Natural killer cell (primary cell): ENCODE measurements at regions of chr18 and their contacts with region 1.

Region 1: GRCh38 chr18:74495581-74496507 is at the start of gene CNDP2:
- DNase-seq: peak; percentile 95 to 99
- ATAC-seq: peak; percentile 73 to 91 (median 82)
- H3K4me3 ChIP-seq: peak within 1 kb of the TSS; percentile 56
- H3K4me3 Mint-ChIP-seq: peak within 1 kb of the TSS; percentile 95
- H3K27ac ChIP-seq: peak within 1 kb of the TSS; percentile 81
- H3K27ac Mint-ChIP-seq: peak within 1 kb of the TSS; percentile 96 to 98
- H3K4me1 ChIP-seq: peaks cover 40% of the 10 kb centered on the region
- H3K4me1 Mint-ChIP-seq: peaks cover 42 to 44% of the 10 kb centered on the region in 2 donors
- H3K27me3 ChIP-seq: no peaks in the 10 kb centered on the region
- H3K27me3 Mint-ChIP-seq: no peaks in the 10 kb centered on the region
- CTCF ChIP-seq: no peak
- total RNA-seq, gene CNDP2: 147 to 167 (median 153) TPM

Region 2: DNA sequence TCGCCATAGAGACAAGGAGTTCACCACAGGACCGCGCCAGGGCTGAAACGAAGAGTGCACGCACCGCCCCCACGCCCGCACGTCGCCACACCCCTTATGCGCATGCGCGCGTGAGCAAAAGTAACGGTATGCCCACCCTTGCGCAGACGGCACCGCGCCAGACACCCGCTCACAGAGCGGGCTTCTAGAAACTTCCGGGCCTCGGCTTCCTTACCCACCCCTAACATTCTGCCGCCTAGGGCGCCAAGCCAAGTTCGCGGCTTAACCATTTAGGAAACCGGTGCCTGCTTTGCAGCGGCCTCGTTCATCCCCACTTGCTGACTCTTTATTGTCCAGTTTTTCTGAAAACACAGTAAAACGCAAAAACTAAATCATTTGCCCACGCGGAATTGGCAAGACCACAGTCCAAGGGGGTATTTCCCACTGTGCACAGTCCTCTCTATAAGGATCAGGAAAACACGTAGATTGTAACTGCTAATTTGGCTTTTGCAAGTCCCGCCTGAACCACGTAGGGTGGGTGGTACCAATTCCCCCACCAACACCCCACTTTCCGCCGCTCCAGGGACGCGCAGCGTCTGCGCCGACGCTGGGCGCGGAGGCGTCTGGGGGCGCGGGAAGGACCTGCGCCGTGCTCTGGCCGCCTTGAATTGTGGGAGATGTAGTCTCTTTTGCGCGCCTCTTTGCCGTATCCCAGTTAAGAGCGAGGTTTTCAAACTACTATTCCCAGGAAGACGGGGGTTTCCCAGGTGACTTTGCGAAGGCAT is 347.9 kb before region 1 on chr18 and contains the starts of genes FBXO15 and TIMM21:
- intact Hi-C with region 1: loop called (anchors 1 kb)
- DNase-seq: peak; percentile 93 to 99
- ATAC-seq: peak; percentile 84 to 93 (median 85)
- H3K4me3 ChIP-seq: peak within 1 kb of the TSS; percentile 84
- H3K4me3 Mint-ChIP-seq: peak within 1 kb of the TSS; percentile 97
- H3K27ac ChIP-seq: peak within 1 kb of the TSS; percentile 96
- H3K27ac Mint-ChIP-seq: peak within 1 kb of the TSS; percentile 98 to 100
- H3K4me1 ChIP-seq: peaks cover 15% of the 10 kb centered on the region
- H3K4me1 Mint-ChIP-seq: peaks cover 36% of the 10 kb centered on the region in 2 donors
- H3K27me3 ChIP-seq: no peaks in the 10 kb centered on the region
- H3K27me3 Mint-ChIP-seq: peaks cover 6 to 7% of the 10 kb centered on the region in 2 donors
- CTCF ChIP-seq: no peak
- total RNA-seq, gene FBXO15: 0.50 to 2.6 (median 0.87) TPM
- total RNA-seq, gene TIMM21: 13.1 to 17.3 (median 16.1) TPM

Region 3: DNA sequence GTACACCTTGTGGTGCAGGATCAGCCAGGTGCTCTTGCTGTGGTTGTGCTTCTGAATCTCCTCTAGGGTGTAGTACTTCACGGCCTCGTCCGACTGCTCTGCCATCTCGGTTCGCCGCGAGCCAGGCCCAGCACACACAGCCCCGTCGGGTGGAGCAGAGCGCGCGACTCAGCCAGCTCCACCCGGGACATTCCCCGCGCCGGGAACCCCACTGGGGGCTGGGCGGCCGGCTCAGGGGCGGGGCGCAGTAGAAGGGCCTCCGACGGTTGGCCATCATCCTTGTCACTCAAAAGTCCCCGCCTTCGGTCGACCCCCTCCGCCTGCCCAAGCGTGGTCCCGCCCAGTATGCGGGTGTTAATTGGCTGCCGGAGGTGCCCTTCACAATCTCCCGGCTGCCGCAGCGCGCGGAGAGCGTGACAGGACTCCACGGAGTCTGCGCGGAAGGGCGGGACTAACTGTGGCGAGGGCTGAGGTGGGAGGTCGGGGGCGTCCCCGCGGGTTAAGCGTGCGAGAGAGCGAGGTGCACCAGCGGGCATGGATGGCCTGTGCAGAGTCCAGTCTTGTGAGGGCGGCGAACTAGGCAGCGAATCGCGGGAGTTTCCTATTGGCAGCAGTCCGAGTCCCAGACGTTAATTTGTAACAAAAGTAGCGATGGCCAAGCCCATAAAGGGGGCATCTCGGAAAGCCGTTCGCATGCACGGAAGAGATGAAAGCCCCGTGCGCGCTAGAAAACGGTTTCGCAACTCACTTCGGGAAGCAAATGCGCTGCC is 203.9 kb before region 1 on chr18 and contains the start of gene CYB5A:
- intact Hi-C with region 1: loop called (anchors 2 kb)
- DNase-seq: peak; percentile 99 to 100
- ATAC-seq: peak; percentile 95 to 100 (median 96)
- H3K4me3 ChIP-seq: peak within 1 kb of the TSS; percentile 95
- H3K4me3 Mint-ChIP-seq: no peak within 1 kb of the TSS
- H3K27ac ChIP-seq: peak within 1 kb of the TSS; percentile 43
- H3K27ac Mint-ChIP-seq: peak within 1 kb of the TSS; percentile 85 to 95
- H3K4me1 ChIP-seq: peaks cover 13% of the 10 kb centered on the region
- H3K4me1 Mint-ChIP-seq: peaks cover 5 to 8% of the 10 kb centered on the region in 2 donors
- H3K27me3 ChIP-seq: no peaks in the 10 kb centered on the region
- H3K27me3 Mint-ChIP-seq: no peaks in the 10 kb centered on the region
- CTCF ChIP-seq: no peak
- total RNA-seq, gene CYB5A: 10.4 to 14.6 (median 13.0) TPM

Region 4: GRCh38 chr18:74353169-74353775 is 142.6 kb before region 1 on chr18:
- intact Hi-C with region 1: loop called (anchors 1 kb)
- DNase-seq: peak in 1 of 2 donors; percentile 86
- ATAC-seq: peak in 2 of 3 donors; percentile 44 to 47
- H3K4me3 ChIP-seq: no peak overlapping the region
- H3K4me3 Mint-ChIP-seq: no peak overlapping the region
- H3K27ac ChIP-seq: no peak overlapping the region
- H3K27ac Mint-ChIP-seq: no peak overlapping the region
- H3K4me1 ChIP-seq: no peaks in the 10 kb centered on the region
- H3K4me1 Mint-ChIP-seq: peaks cover 0 to 5% of the 10 kb centered on the region in 2 donors
- H3K27me3 ChIP-seq: peaks cover 2% of the 10 kb centered on the region
- H3K27me3 Mint-ChIP-seq: no peaks in the 10 kb centered on the region
- CTCF ChIP-seq: peak; percentile 36

Region 5: GRCh38 chr18:74370115-74370514 is 125.7 kb before region 1 on chr18:
- intact Hi-C with region 1: no loop called
- DNase-seq: no peak
- ATAC-seq: no peak
- H3K4me3 ChIP-seq: no peak overlapping the region
- H3K4me3 Mint-ChIP-seq: no peak overlapping the region
- H3K27ac ChIP-seq: no peak overlapping the region
- H3K27ac Mint-ChIP-seq: no peak overlapping the region
- H3K4me1 ChIP-seq: peaks cover 14% of the 10 kb centered on the region
- H3K4me1 Mint-ChIP-seq: peaks cover 0 to 9% of the 10 kb centered on the region in 2 donors
- H3K27me3 ChIP-seq: no peaks in the 10 kb centered on the region
- H3K27me3 Mint-ChIP-seq: peaks cover 15 to 19% of the 10 kb centered on the region in 2 donors
- CTCF ChIP-seq: no peak

Region 6: DNA sequence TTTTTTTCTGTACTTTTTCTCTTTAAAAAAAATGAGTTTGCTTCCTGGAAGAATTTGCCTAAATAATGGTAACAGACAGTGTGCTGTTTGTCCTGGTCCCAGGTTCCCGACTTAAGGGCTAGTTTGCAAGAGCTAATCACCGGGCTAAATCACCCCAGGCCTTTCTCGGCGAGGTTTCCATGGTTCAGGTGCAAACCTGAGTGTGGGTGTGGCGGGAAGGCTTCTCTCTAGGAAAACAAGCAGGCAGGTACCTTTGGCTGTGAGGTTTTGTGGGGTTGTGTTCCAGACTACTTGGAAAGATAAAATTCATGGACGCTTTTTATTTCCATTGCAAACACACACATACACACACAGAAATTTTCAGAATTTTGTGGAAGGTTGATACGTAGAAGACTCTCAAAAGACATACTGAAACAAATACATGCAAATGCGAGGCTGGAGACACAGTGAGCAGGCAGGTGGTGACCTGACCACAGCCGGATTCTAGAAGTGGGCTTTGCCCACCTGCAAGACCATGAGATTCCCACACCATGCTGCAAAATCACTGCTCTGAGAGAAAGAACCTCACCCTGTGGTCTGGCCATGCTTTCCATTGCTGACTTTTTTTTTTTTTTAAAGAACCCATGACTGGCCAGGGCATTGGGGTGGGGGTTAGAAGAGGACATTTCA is 39.3 kb after region 1 on chr18:
- intact Hi-C with region 1: no loop called
- DNase-seq: no peak
- ATAC-seq: no peak
- H3K4me3 ChIP-seq: no peak overlapping the region
- H3K4me3 Mint-ChIP-seq: no peak overlapping the region
- H3K27ac ChIP-seq: no peak overlapping the region
- H3K27ac Mint-ChIP-seq: no peak overlapping the region
- H3K4me1 ChIP-seq: no peaks in the 10 kb centered on the region
- H3K4me1 Mint-ChIP-seq: no peaks in the 10 kb centered on the region
- H3K27me3 ChIP-seq: no peaks in the 10 kb centered on the region
- H3K27me3 Mint-ChIP-seq: peaks cover 3 to 6% of the 10 kb centered on the region in 2 donors
- CTCF ChIP-seq: no peak

Region 7: GRCh38 chr18:76492669-76493212 is 1996.9 kb after region 1 on chr18:
- intact Hi-C with region 1: loop called (anchors 5 kb)
- DNase-seq: peak; percentile 97 to 100
- ATAC-seq: peak; percentile 61 to 89 (median 80)
- H3K4me3 ChIP-seq: peak overlapping the region; percentile 82
- H3K4me3 Mint-ChIP-seq: peak overlapping the region; percentile 98
- H3K27ac ChIP-seq: peak overlapping the region; percentile 57
- H3K27ac Mint-ChIP-seq: peak overlapping the region; percentile 88 to 98
- H3K4me1 ChIP-seq: peaks cover 36% of the 10 kb centered on the region
- H3K4me1 Mint-ChIP-seq: peaks cover 38 to 55% of the 10 kb centered on the region in 2 donors
- H3K27me3 ChIP-seq: peaks cover 2% of the 10 kb centered on the region
- H3K27me3 Mint-ChIP-seq: no peaks in the 10 kb centered on the region
- CTCF ChIP-seq: no peak